Adrenal gland (tissue), 19 donors: ENCODE measurements at regions of chr14 and their contacts with region 1.

Region 1: DNA sequence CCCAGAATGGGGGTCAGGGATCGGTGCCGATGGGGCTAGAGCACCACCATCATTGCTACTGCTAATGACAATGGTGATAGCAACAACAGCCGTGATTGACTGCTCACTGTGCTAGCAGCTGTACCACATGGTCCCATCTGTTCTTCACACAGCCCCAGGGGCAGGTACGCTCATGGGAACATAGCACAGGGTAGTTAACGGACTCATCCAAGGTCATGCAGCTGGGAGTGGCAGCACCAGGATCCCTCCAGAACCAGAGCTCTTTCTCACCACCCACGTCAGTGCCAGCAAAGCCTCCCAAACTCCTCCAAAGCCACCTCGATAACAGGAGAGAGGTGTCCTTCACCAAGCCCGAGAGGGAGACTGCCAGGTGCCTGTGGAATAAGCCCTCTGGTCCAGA is 11.2 kb upstream of the DYNC1H1 start:
- DNase-seq: peak in 3 of 7 donors; percentile 38 to 55 (median 49)
- H3K4me3 ChIP-seq: no peak overlapping the region
- H3K27ac ChIP-seq: peak overlapping the region in 1 of 5 donors; percentile 10
- H3K4me1 ChIP-seq: peaks cover 11 to 16% of the 10 kb centered on the region in 2 donors
- H3K27me3 ChIP-seq: no peaks in the 10 kb centered on the region
- CTCF ChIP-seq: no peak
- POLR2A ChIP-seq: no peak

Region 2: GRCh38 chr14:101761032-101761880 is 191.9 kb before region 1 on chr14 and contains the start of gene PPP2R5C:
- intact Hi-C with region 1: loop called in 1 of 2 experiments (anchors 10 kb)
- DNase-seq: peak; percentile 92 to 95 (median 95)
- H3K4me3 ChIP-seq: peak within 1 kb of the TSS; percentile 13 to 96 (median 58)
- H3K27ac ChIP-seq: peak within 1 kb of the TSS; percentile 43 to 96 (median 93)
- H3K4me1 ChIP-seq: peaks cover 9 to 21% of the 10 kb centered on the region in 2 donors
- H3K27me3 ChIP-seq: no peaks in the 10 kb centered on the region
- CTCF ChIP-seq: peak in 1 of 6 experiments; percentile 10
- POLR2A ChIP-seq: peak; percentile 57 to 82
- total RNA-seq, gene PPP2R5C: 66.5 to 216 (median 140) TPM